CD4-positive, alpha-beta memory T cell (primary cell): ENCODE measurements at regions of chr19 and their contacts with region 1.

Region 1: DNA sequence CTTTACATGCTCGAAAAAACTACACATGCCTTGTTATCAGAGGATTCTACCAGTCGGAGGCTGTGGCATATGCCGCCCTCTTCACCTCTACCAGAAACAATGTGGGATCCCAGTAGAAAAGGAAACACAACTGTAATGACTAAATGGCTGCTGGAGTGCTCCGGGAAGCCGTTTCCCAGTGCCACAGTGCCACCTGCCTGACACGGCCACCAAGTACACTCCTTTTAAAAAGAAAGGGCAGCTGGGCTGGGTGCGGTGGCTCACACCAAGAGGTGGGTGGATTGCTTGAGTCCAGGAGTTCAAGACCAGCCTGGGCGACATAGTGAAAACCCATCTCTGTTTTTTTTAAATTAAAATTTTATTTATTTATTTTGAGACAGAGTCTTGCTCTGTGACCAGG is 67.3 kb downstream of the TRPM4 start:
- DNase-seq: no peak
- H3K4me3 ChIP-seq: no peak overlapping the region
- H3K4me3 Mint-ChIP-seq: no peak overlapping the region
- H3K27ac ChIP-seq: no peak overlapping the region
- H3K27ac Mint-ChIP-seq: peak overlapping the region in 1 of 7 donors; percentile 73
- H3K4me1 ChIP-seq: peaks cover 8% of the 10 kb centered on the region
- H3K4me1 Mint-ChIP-seq: peaks cover 4 to 9% (median 5%) of the 10 kb centered on the region in 4 donors
- H3K27me3 ChIP-seq: no peaks in the 10 kb centered on the region
- H3K27me3 Mint-ChIP-seq: peaks cover 6% of the 10 kb centered on the region in 2 donors

Region 2: DNA sequence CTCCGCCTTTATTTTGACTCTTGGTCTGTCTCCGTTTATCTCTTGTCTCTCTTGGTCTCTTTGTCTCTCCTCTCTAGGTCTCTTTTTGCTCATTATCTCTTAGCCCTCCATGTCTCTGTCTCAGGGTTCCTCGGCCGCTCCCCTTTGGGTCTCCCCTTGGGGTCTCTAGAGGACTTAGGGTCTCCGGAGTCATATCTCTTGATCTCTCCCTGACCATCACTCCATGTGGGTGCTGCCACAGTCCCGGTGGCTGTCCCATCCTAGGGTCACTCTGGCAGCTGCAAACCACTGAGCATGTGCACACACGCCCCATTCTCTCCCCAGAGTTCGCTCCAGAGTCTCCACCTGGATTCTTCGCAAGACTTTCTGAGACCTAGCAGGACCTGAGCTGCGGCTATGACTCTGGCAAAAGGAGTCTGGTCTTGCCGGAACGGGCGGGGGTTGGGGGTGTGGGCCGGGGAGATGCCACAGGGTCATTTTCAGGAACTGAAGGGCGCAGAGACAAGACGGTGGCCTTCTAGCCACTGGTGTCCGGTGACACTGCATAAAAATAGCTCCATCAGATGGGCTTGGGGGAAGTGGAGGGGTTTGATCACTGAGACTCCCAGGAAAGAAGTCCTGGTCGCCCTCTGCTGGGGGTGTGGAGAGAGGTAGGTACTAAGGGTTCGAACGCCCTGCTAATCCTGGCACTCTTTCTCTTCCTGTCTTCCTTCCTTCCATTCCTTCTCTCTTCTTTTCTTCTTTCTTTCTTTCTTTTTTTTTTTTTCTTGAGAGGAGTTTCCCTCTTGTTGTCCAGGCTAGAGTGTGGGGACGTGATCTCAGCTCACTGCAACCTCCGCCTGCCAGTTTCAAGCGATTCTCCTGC is 151.1 kb before region 1 on chr19:
- CTCF ChIA-PET with region 1: no interaction called
- POLR2A ChIA-PET with region 1: no interaction called
- intact Hi-C with region 1: no loop called
- DNase-seq: no peak
- H3K4me3 ChIP-seq: no peak overlapping the region
- H3K4me3 Mint-ChIP-seq: peak overlapping the region in 5 of 8 donors; percentile 8 to 82 (median 60)
- H3K27ac ChIP-seq: no peak overlapping the region
- H3K27ac Mint-ChIP-seq: no peak overlapping the region
- H3K4me1 ChIP-seq: no peaks in the 10 kb centered on the region
- H3K4me1 Mint-ChIP-seq: peaks cover 6 to 19% (median 12%) of the 10 kb centered on the region in 4 donors
- H3K27me3 ChIP-seq: peaks cover 9% of the 10 kb centered on the region
- H3K27me3 Mint-ChIP-seq: peaks cover 41 to 45% of the 10 kb centered on the region in 2 donors

Region 3: GRCh38 chr19:49188626-49189200 is 36.1 kb before region 1 on chr19:
- CTCF ChIA-PET with region 1: no interaction called
- POLR2A ChIA-PET with region 1: no interaction called
- intact Hi-C with region 1: no loop called
- DNase-seq: no peak
- H3K4me3 ChIP-seq: no peak overlapping the region
- H3K4me3 Mint-ChIP-seq: no peak overlapping the region
- H3K27ac ChIP-seq: no peak overlapping the region
- H3K27ac Mint-ChIP-seq: peak overlapping the region in 1 of 7 donors; percentile 77
- H3K4me1 ChIP-seq: peaks cover 10% of the 10 kb centered on the region
- H3K4me1 Mint-ChIP-seq: peaks cover 6 to 20% (median 13%) of the 10 kb centered on the region in 4 donors
- H3K27me3 ChIP-seq: no peaks in the 10 kb centered on the region
- H3K27me3 Mint-ChIP-seq: peaks cover 0 to 1% of the 10 kb centered on the region in 2 donors

Region 4: DNA sequence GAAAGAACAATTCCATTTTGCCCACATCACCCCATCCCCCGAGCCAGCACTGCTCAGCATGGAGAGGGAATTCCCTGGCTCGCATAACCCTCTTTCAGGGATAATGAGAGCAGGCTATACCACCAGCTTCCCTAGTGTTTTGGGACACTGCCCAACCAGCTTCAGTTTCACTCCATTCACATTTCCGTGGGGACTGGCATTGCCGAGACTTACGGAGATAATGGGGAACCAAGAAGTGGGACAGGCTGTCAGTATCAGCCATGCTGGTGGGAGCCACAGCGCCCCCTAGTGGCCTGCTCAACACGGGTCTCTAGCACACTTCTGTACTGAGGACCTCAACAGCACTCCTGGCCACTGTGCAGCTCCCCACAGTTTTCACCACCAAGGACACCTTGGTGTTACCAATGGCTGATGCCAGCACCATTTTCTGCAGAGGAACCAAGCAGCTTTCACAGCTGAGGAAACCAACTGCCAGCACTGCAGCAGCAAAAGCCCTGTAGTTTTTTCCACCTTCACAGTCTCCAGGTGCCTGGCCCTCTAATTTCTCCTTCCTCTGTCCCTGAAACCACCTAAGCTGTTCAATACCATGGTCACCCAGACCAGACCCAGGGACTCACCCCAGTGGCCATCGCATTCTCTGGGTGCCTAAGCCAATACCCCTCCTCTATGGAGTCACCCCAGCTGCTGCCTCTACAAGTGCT is 76.5 kb after region 1 on chr19:
- CTCF ChIA-PET with region 1: interaction called, 21 read pairs
- POLR2A ChIA-PET with region 1: no interaction called
- intact Hi-C with region 1: loop called (anchors 1 kb)
- DNase-seq: peak; percentile 66 to 78 (median 70)
- H3K4me3 ChIP-seq: no peak overlapping the region
- H3K4me3 Mint-ChIP-seq: peak overlapping the region in 2 of 8 donors; percentile 53 to 57
- H3K27ac ChIP-seq: no peak overlapping the region
- H3K27ac Mint-ChIP-seq: peak overlapping the region in 1 of 7 donors; percentile 22
- H3K4me1 ChIP-seq: peaks cover 4% of the 10 kb centered on the region
- H3K4me1 Mint-ChIP-seq: peaks cover 0 to 7% (median 2%) of the 10 kb centered on the region in 4 donors
- H3K27me3 ChIP-seq: no peaks in the 10 kb centered on the region
- H3K27me3 Mint-ChIP-seq: peaks cover 0 to 1% of the 10 kb centered on the region in 2 donors